Mammary epithelial cell (primary cell): ENCODE measurements at regions of chr2 and their contacts with region 1.

Region 1: DNA sequence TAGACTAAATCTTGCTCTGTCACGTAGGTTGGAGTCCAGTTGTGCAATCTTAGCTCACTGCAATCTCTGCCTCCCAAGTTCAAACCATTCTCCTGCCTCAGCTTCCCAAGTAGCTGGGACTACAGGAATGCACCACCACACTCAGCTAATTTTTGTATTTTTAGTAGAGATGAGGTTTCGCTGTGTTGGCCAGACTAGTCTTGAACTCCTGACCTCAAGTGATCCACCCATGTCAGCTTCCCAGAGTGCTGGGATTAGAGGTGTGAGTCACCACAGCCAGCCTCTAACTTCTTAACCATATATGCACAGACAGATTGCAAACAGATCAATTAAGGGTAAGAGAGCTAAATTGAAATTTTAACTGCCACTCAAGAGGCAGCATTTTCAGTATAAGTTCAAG is 22.1 kb upstream of the CNGA3 start:
- DNase-seq: no peak
- H3K4me3 ChIP-seq: no peak overlapping the region
- H3K27ac ChIP-seq: no peak overlapping the region
- H3K4me1 ChIP-seq: no peaks in the 10 kb centered on the region
- H3K27me3 ChIP-seq: no peaks in the 10 kb centered on the region
- CTCF ChIP-seq: no peak

Region 2: GRCh38 chr2:97834610-97835009 is 489.6 kb before region 1 on chr2:
- CTCF ChIA-PET with region 1: interaction called, 14 read pairs
- dilution Hi-C with region 1: no loop called
- in situ Hi-C with region 1: no loop called
- intact Hi-C with region 1: no loop called
- DNase-seq: no peak
- H3K4me3 ChIP-seq: no peak overlapping the region
- H3K27ac ChIP-seq: no peak overlapping the region
- H3K4me1 ChIP-seq: no peaks in the 10 kb centered on the region
- H3K27me3 ChIP-seq: no peaks in the 10 kb centered on the region
- CTCF ChIP-seq: no peak

Region 3: GRCh38 chr2:98556344-98557033 is 232.3 kb after region 1 on chr2:
- CTCF ChIA-PET with region 1: no interaction called
- dilution Hi-C with region 1: no loop called
- in situ Hi-C with region 1: no loop called
- intact Hi-C with region 1: no loop called
- DNase-seq: no peak
- H3K4me3 ChIP-seq: no peak overlapping the region
- H3K27ac ChIP-seq: no peak overlapping the region
- H3K4me1 ChIP-seq: no peaks in the 10 kb centered on the region
- H3K27me3 ChIP-seq: no peaks in the 10 kb centered on the region
- CTCF ChIP-seq: no peak